ENCODE measurements at regions of chr11 and their contacts with region 1.

Region 1: DNA sequence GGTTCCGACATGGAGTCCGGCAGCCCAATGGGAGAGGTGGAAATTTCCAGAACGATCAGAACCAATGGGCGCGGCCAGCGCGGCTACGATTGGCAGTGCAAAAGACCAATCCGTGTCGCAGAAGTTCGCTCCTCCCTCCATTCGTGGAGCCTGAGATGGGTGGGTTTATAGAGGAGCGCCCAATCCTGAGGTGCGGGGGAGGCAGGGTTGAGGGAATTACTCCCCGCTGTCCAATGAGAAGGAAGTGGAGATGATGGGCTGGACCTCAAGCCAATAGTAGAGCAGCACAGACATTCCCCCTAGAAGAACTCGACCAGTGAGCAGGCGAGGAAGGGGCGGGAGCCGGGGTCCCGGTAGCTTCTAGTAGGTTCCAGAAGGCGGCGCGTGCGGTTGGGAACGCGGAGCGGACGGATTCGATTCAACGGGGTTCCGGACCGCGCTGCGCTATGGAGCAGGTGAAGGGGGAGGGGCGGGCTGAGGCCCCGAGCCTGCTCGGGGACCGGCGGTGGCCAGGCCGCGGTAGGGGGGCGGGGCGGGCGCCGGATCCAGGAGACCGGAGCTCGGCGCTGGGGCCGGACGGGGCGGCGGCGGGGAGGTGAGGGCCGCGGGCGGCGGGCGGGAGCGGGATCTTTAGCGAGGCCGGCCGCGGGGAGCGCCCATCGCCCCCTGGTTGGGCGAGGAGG is at the start of gene STIP1:
- DNase-seq: peak; percentile 99
- H3K4me3 Mint-ChIP-seq: no peak within 1 kb of the TSS
- H3K27ac Mint-ChIP-seq: peak within 1 kb of the TSS; percentile 94
- H3K4me1 Mint-ChIP-seq: peaks cover 54% of the 10 kb centered on the region
- H3K27me3 Mint-ChIP-seq: no peaks in the 10 kb centered on the region
- total RNA-seq, gene STIP1: 264 to 272 TPM

Region 2: DNA sequence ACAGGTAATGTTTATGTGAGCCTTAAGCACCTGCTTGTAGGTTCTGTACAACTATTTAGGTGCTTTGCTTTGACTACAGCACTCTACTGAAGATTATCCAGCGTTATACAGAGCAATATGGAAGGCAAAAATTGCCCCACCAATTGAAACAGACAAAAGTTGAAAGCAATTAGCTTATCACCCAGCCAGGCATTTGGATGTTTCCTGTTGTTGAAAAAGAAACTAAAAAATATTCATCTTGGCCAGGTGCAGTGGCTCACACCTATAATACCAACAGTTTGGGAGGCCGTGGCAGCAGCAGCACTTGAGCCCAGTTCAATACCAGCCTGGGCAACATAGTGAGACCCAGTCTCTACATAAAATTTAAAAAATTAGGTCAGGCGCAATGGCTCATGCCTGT is 533.3 kb before region 1 on chr11:
- CTCF ChIA-PET with region 1: no interaction called
- intact Hi-C with region 1: no loop called
- DNase-seq: no peak
- H3K4me3 Mint-ChIP-seq: no peak overlapping the region
- H3K27ac Mint-ChIP-seq: no peak overlapping the region
- H3K4me1 Mint-ChIP-seq: peaks cover 7% of the 10 kb centered on the region
- H3K27me3 Mint-ChIP-seq: no peaks in the 10 kb centered on the region

Region 3: GRCh38 chr11:64094463-64095260 is 91.3 kb before region 1 on chr11:
- CTCF ChIA-PET with region 1: no interaction called
- intact Hi-C with region 1: no loop called
- DNase-seq: no peak
- H3K4me3 Mint-ChIP-seq: no peak overlapping the region
- H3K27ac Mint-ChIP-seq: no peak overlapping the region
- H3K4me1 Mint-ChIP-seq: peaks cover 4% of the 10 kb centered on the region
- H3K27me3 Mint-ChIP-seq: no peaks in the 10 kb centered on the region

Region 4: DNA sequence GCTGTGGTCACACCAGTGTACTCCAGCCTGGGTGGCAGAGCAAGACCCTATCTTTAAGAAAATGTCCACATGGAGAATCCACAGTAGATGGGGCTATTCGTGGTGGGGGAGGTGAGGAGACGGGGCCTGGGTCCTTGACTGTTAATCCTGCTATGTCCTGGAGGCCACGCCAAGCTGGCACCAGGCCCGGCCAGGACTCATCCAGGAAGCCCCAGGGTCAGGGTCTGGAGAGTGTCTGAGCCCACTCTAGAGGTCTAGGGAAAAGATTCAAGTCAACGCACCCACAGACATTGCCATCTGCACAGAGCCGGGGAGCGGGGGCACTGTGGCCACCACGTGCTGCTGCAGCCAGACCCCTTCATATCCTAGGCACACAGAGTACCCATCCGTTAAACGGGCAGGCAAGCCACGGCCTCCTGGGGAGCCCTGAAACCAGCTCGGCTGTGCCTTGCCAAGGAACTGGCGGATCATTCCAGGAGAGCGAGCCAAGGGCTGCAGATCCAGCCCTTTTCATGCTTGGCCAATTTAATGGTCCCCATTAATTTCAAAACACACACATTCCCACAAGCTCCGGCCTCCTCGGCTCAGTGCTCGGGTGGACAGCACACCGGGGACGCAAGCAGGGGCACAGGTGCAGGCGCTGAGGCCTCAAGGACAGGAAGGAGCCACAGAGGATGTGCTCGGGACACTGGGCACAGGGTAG is 44.7 kb before region 1 on chr11:
- CTCF ChIA-PET with region 1: no interaction called
- intact Hi-C with region 1: no loop called
- DNase-seq: no peak
- H3K4me3 Mint-ChIP-seq: no peak overlapping the region
- H3K27ac Mint-ChIP-seq: no peak overlapping the region
- H3K4me1 Mint-ChIP-seq: peaks cover 9% of the 10 kb centered on the region
- H3K27me3 Mint-ChIP-seq: no peaks in the 10 kb centered on the region

Region 5: GRCh38 chr11:64165849-64166635 is 19.9 kb before region 1 on chr11 and contains the start of gene MACROD1:
- CTCF ChIA-PET with region 1: interaction called, 6 read pairs
- intact Hi-C with region 1: loop called (anchors 2 kb)
- DNase-seq: peak; percentile 85
- H3K4me3 Mint-ChIP-seq: peak within 1 kb of the TSS; percentile 84
- H3K27ac Mint-ChIP-seq: peak within 1 kb of the TSS; percentile 69
- H3K4me1 Mint-ChIP-seq: peaks cover 10% of the 10 kb centered on the region
- H3K27me3 Mint-ChIP-seq: no peaks in the 10 kb centered on the region
- total RNA-seq, gene MACROD1: 38.7 to 48.6 TPM

Region 6: DNA sequence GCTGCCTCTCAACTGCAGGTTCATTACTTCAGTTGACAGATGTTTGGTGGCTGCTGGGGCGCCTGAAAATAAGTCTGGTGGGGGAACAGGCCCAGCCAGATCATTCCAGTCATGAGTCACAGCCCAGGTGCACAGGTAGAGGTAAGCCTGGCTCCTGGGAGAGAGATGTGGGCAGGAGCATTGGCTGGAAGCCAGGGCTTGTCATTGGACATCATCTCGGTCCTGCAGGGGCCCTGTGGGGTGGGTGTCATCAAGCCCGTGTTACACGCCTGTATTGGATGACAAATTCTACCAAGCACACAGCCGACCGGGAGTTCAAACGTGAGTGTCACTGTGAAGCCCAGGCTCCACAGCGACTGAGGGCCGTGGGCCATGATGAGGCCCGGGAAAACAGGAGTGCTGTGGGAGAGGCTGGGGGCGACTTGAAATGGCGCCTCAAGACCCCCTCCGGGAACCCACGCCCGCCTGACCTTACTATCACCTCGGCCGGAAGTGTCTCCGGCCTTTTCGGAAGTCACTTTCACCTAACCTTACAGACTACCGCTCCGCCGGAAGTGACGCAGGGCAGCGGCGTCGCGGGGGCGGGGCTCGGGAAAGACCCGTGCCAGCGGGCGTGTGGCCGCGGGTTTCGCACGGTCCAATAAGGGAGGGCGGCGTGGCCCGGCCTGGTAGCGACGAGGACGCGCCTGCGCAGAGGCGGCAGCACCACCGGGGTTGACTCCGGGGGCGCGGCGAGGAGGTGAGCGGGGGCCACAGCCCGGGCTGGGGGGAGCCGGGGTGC is 54.6 kb after region 1 on chr11 and contains the start of gene FKBP2:
- CTCF ChIA-PET with region 1: no interaction called
- intact Hi-C with region 1: loop called (anchors 1 kb)
- DNase-seq: peak; percentile 97
- H3K4me3 Mint-ChIP-seq: peak within 1 kb of the TSS; percentile 92
- H3K27ac Mint-ChIP-seq: peak within 1 kb of the TSS; percentile 98
- H3K4me1 Mint-ChIP-seq: peaks cover 35% of the 10 kb centered on the region
- H3K27me3 Mint-ChIP-seq: no peaks in the 10 kb centered on the region
- total RNA-seq, gene FKBP2: 17.2 to 20.0 TPM

Region 7: DNA sequence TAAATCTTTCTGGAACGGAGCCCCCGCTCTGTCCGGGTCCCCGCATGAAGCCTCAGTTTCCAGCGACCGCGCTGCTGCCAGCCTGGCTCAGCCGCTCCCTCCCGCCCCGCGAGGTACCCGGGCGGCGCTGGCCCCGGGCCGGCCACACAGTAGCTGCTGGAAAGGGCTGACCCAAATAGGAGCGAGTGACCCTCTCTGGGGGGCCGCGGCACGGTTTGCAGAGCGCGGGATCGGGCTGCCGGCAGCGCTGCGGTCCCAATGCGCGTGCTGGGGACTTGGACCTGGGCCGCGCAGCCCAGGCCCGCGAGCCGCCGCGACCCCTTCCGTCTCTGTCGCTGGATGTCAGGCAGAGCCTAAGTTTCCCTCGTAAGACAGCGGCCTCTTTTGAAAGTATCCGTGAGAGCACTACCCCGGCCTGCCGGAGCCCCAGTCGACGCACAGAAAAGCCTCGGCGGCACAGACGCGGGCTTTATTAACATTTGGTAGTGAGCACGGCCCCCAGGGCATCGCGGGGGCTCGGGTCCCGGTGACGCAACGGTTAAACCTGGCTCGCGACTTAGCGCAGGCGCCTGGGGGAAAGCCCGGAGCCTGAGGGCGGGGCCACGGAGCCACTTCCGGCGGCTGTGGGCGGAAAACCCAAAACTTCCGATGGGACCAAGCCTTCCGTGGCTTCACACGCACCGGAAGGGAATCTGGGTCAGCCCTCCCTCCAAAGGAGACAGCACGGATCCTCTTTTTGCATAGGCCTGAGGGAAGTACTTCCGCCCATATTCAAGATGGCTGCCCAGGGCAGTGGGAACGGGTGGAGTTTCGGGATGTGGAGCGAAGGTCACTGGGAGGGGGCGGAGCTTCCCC is 83.7 kb after region 1 on chr11:
- CTCF ChIA-PET with region 1: no interaction called
- intact Hi-C with region 1: loop called (anchors 1 kb)
- DNase-seq: peak; percentile 98
- H3K4me3 Mint-ChIP-seq: peak overlapping the region; percentile 90
- H3K27ac Mint-ChIP-seq: peak overlapping the region; percentile 88
- H3K4me1 Mint-ChIP-seq: peaks cover 15% of the 10 kb centered on the region
- H3K27me3 Mint-ChIP-seq: no peaks in the 10 kb centered on the region